ENCODE measurements at regions of chr6 and their contacts with region 1.

Region 1: GRCh38 chr6:89952686-89953085 is 58.4 kb downstream of the GJA10 start:
- DNase-seq: peak; percentile 89
- H3K4me3 Mint-ChIP-seq: peak overlapping the region; percentile 69
- H3K27ac Mint-ChIP-seq: peak overlapping the region; percentile 84
- H3K4me1 Mint-ChIP-seq: peaks cover 63% of the 10 kb centered on the region
- H3K27me3 Mint-ChIP-seq: no peaks in the 10 kb centered on the region

Region 2: DNA sequence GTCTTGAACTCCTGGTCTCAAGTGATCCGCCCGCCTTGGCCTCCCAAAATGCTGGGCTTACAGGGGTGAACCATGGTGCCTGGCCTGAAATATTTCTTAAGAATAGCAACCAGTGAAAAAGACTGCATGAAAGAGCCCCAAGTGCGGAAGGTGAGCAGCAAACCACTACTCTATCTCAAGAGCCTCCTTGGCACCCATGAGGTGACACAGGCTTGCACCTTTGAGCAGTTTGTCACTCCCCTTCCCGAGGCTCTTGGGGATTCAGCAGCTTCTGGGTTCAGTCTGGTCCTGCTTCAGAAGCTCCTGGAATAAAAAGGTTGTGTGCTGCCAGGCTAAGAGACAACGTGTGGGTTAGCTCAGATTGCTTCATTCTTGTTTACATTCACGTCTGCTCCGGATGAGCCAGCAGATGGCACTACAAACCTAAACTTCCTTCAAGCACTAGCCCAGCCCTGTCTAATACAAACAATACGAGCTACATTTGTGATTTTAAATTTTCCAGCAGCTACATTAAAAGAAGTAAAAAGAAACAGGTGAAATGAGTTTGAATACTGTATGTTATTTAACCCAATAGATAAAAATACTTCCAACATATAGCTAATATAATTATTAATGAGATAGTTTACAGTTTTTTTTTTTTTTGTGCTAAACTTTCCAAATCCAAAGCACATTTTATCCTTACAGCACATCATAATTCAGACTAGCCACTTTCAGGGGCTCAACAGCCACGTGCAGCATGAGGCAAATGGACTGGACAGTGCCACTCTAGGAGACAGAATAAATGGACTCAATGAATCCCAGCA is 12.3 kb before region 1 on chr6:
- intact Hi-C with region 1: loop called (anchors 1 kb)
- DNase-seq: peak; percentile 91
- H3K4me3 Mint-ChIP-seq: no peak overlapping the region
- H3K27ac Mint-ChIP-seq: peak overlapping the region; percentile 41
- H3K4me1 Mint-ChIP-seq: peaks cover 34% of the 10 kb centered on the region
- H3K27me3 Mint-ChIP-seq: no peaks in the 10 kb centered on the region

Region 3: GRCh38 chr6:89966228-89966544 is 13.5 kb after region 1 on chr6:
- intact Hi-C with region 1: loop called (anchors 1 kb)
- DNase-seq: no peak
- H3K4me3 Mint-ChIP-seq: no peak overlapping the region
- H3K27ac Mint-ChIP-seq: peak overlapping the region; percentile 71
- H3K4me1 Mint-ChIP-seq: peaks cover 53% of the 10 kb centered on the region
- H3K27me3 Mint-ChIP-seq: no peaks in the 10 kb centered on the region

Region 4: DNA sequence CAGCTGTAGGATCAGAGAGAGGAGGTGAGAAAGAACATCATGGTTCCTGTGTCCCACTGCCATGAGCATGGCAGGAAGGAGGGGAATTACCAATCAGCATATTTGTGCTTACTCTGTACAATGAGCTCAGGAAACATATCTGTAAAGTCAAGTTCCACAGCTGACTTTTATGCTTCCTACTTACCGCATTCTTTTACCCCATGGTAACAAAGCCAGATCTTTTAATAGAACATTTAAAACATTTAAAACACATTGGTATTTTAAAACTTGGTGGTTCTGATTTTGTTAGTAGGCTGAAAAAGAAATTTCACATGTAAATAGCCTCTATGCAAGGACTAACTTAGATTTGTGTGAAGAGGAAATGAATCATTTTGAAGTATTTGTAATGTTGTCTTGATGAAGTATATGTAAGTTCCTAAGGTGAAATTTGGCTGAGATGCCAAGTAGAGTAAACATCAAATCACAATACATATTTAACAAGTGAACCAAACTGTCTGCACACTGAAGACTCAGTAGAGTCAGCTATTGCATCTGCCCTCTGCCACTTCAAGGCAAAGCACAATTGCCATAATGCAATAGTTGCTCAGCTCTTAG is 56.3 kb after region 1 on chr6:
- intact Hi-C with region 1: loop called (anchors 5 kb)
- DNase-seq: peak; percentile 54
- H3K4me3 Mint-ChIP-seq: peak overlapping the region; percentile 40
- H3K27ac Mint-ChIP-seq: peak overlapping the region; percentile 85
- H3K4me1 Mint-ChIP-seq: peaks cover 33% of the 10 kb centered on the region
- H3K27me3 Mint-ChIP-seq: no peaks in the 10 kb centered on the region